Right cardiac atrium (tissue), 5 donors: ENCODE measurements at regions of chr6 and their contacts with region 1.

Region 1: DNA sequence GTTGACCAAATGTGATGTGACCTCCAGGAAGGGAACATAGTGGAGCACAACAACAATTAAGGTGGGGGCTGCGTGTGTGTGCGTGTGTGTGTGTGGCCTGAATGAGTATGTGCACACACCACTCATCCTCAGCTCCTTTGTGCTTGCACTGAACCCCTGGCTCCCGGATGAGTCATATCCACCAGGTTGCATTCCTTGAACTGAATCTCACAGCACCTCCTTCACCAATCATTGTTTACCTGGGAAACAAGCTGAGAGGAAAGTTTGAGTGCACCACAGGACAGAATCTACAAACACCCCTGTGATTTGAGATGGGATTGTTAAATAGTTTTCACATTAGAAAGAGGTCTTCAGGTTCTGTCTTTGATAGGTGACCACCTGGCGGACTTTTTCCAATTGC is 33.7 kb upstream of the GPR6 start:
- DNase-seq: no peak
- ATAC-seq: no peak
- H3K4me3 ChIP-seq: no peak overlapping the region
- H3K27ac ChIP-seq: no peak overlapping the region
- H3K4me1 ChIP-seq: no peaks in the 10 kb centered on the region
- H3K27me3 ChIP-seq: no peaks in the 10 kb centered on the region

Region 2: DNA sequence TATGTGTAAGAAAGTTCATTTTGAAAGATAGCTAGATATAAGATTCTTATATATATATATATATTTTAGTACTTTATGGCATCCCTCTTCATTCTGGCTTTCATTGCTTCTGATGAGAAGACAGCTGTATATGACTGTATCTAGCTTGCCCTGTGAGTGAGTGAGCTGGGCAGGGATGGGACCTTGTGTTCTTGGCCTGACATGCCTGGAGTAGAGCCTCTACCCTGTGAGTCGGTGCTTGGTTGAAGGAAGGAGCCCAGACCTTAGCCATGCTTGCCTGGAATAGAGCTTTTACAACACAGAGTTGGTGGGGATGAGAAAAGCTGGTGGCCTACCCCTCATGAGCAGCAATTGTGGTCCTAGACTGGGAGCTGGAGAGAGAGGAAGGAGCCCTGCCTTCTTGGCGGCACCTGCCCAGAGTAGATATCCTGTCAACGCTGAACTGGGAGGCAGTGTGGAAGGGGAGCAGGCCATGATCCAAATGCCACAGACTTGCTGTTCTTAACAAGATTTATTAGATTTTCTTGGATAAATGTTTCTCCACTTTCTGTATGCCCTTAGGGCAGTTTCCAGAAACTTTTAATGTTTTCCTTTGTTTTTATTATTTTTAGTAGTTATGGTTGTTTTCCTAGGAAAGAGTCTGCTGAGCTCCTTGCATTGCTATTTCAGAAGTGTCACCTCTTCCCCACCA is 221.7 kb before region 1 on chr6:
- intact Hi-C with region 1: no loop called
- DNase-seq: no peak
- ATAC-seq: peak in 1 of 2 donors; percentile 40
- H3K4me3 ChIP-seq: no peak overlapping the region
- H3K27ac ChIP-seq: no peak overlapping the region
- H3K4me1 ChIP-seq: no peaks in the 10 kb centered on the region
- H3K27me3 ChIP-seq: no peaks in the 10 kb centered on the region

Region 3: GRCh38 chr6:110140650-110141049 is 196.2 kb after region 1 on chr6:
- intact Hi-C with region 1: loop called in 1 of 4 experiments (anchors 5 kb)
- DNase-seq: no peak
- ATAC-seq: no peak
- H3K4me3 ChIP-seq: no peak overlapping the region
- H3K27ac ChIP-seq: no peak overlapping the region
- H3K4me1 ChIP-seq: no peaks in the 10 kb centered on the region
- H3K27me3 ChIP-seq: no peaks in the 10 kb centered on the region

Region 4: DNA sequence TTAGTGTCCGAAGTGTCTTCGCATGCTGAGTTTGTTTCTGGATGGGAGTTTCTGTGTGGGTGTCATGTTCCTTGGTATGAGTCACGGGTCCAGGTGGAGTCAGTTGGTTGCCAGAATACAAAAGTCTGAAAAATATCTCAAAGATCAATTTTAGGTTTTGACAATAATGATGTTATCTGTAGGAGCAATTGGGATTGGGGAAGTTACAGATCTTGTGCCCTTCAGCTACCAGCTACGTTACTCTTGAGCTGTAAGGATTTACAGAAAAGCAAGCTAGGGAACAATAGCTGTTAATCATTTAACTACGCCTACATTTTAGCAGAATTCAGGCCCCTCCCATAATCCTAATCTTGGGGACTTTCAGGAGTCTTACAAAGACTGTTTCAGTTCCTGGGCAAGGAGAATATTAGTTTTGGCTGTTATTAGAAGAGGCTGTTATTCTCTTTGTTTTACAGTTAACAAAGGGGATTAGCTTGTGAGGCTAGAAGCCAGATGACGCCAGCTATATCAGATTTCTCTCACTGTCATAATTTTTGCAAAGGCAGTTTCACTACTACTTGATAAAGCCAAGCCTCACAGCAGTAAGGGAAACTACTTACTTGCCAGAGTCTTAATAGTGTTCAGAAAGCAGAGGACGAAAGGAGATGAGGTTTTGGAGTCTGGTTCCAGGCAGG is 547.3 kb after region 1 on chr6:
- intact Hi-C with region 1: no loop called
- DNase-seq: no peak
- ATAC-seq: peak; percentile 51 to 74
- H3K4me3 ChIP-seq: no peak overlapping the region
- H3K27ac ChIP-seq: no peak overlapping the region
- H3K4me1 ChIP-seq: no peaks in the 10 kb centered on the region
- H3K27me3 ChIP-seq: no peaks in the 10 kb centered on the region